ENCODE measurements at regions of chr5 and their contacts with region 1.

Region 1: DNA sequence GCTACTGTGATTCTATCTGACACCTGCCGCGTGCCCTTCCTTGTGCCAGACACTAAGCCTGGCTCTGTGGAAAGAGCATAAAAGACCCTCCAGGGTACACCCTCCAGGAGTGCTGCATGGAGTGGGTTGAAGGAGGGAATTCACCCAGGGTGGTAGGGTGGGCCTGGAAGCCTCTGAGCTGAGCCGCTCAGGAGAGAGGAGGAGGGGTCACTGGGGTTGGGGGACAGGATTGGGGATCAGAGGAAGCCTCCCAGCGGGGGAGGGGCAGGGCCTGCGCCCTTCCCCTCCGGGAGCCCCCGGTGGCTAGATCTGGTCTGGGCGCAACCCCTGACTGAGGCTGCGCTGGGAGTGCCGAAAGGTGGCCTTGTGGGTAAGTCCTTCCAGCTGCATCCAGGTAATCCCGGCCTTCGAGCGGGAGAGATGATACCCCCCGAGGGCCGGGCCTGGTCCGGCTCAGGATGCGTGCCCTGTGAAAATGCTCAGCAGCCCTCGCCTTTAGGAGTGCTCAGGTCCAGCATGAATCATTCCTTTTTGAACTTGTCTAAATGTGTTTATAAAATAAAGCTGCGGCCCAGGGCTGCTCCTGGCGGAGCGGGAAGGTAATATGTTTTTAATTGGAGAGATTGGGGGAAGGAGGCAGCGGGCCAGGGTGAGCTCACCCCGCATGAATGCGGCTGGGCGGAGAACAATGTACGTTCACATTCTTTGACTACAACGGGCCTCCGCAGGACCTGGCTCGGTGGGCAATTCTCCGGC is 118.1 kb upstream of the SMIM23 start:
- DNase-seq: peak in 1 of 2 donors; percentile 89
- H3K4me3 ChIP-seq: peak overlapping the region; percentile 1 to 38
- H3K27ac ChIP-seq: peak overlapping the region; percentile 74 to 78
- H3K4me1 ChIP-seq: peaks cover 0 to 9% of the 10 kb centered on the region in 2 donors
- H3K27me3 ChIP-seq: no peaks in the 10 kb centered on the region
- CTCF ChIP-seq: peak in 2 of 3 experiments; percentile 28 to 40

Region 2: DNA sequence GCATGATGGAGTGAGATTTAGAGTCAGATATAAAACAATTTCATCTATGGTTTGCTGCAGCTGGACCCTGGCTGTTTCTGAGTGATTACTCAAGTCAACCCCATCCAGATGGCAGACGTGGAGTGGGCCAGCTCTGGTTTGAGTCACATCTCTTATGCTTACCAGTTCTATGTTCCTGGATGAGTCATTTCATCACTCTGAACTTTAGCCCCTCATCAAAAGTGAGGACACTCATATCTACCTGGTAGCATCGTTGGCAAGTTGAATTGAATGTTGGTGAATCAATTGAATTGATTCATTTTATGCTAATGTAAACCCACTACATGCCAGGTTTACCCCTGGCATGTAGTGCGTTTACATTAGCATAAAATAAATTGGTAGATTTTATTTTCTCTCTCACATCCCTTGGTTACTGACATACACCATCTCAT is 71.7 kb before region 1 on chr5:
- intact Hi-C with region 1: loop called (anchors 5 kb)
- DNase-seq: peak; percentile 22 to 75
- H3K4me3 ChIP-seq: peak overlapping the region in 1 of 2 donors; percentile 7
- H3K27ac ChIP-seq: peak overlapping the region; percentile 65 to 68
- H3K4me1 ChIP-seq: peaks cover 5 to 12% of the 10 kb centered on the region in 2 donors
- H3K27me3 ChIP-seq: no peaks in the 10 kb centered on the region
- CTCF ChIP-seq: no peak

Region 3: DNA sequence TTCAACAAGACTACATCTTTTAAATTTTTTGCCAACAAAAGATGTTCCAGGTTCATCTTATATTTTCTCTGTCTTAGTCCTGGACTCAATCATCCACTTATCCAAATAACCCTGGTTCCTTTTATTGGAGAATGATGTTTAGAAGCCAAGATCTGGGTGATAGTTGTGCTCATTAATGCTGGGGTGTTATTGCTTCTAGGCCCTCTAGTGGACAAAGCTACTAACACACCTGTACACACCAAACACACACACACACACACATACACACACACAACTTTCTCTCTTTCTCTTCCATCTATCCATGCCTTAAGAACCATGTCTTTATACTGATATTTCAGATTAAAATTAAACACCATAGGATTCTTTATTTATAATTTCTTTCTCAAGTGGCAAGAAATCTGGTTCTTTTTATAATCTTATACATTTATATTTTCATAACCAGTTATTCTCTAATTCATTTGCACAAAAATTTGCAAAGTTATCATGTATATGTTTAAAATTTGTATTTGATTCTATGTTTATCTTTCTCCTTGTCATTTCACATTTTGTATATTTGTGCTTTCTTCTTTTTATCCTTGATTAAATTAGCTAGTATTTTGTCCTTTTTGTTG is 61.0 kb before region 1 on chr5:
- intact Hi-C with region 1: no loop called
- DNase-seq: no peak
- H3K4me3 ChIP-seq: no peak overlapping the region
- H3K27ac ChIP-seq: no peak overlapping the region
- H3K4me1 ChIP-seq: no peaks in the 10 kb centered on the region
- H3K27me3 ChIP-seq: no peaks in the 10 kb centered on the region
- CTCF ChIP-seq: peak in 1 of 3 experiments; percentile 10

Region 4: GRCh38 chr5:171630027-171630669 is 37.4 kb before region 1 on chr5:
- intact Hi-C with region 1: loop called (anchors 1 kb)
- DNase-seq: peak in 1 of 2 donors; percentile 64
- H3K4me3 ChIP-seq: peak overlapping the region in 1 of 2 donors; percentile 25
- H3K27ac ChIP-seq: no peak overlapping the region
- H3K4me1 ChIP-seq: peaks cover 0 to 5% of the 10 kb centered on the region in 2 donors
- H3K27me3 ChIP-seq: no peaks in the 10 kb centered on the region
- CTCF ChIP-seq: peak; percentile 18 to 60 (median 37)